ENCODE measurements at regions of chr16 and their contacts with region 1.

Region 1: DNA sequence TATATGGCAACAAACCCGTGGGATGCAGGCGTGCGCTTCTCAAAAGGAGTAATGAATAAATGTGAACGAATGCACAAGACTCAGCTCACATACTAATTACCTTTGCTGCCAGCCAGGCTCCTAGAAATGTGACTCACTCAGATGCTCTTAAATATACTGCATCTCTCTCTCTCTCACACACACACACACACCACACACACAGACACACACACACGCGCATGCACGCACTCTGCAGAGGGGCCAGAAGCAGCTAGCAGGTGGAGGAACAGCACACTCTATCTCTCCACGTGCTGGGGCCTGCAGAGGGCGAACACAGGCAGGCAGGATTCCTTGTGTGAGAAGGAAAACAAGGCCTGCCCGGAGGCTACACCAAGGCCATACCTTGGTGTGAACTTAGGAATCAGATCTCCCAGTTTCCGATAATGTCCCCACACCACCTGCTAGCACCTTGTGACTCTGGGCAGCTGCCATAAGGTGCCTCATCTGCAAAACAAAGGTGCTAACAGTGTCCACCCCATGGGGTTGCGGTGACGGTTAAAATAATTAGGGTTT is 5.3 kb downstream of the GPRC5B start:
- DNase-seq: peak in 3 of 5 donors; percentile 36 to 75 (median 54)
- ATAC-seq: peak; percentile 28 to 64 (median 48)
- H3K4me3 ChIP-seq: no peak overlapping the region
- H3K27ac ChIP-seq: peak overlapping the region in 9 of 12 donors; percentile 22 to 96 (median 75)
- H3K4me1 ChIP-seq: peaks cover 10 to 85% (median 59%) of the 10 kb centered on the region in 12 donors
- H3K27me3 ChIP-seq: peaks cover 0 to 14% (median 0%) of the 10 kb centered on the region in 9 donors
- CTCF ChIP-seq: no peak
- POLR2A ChIP-seq: no peak

Region 2: DNA sequence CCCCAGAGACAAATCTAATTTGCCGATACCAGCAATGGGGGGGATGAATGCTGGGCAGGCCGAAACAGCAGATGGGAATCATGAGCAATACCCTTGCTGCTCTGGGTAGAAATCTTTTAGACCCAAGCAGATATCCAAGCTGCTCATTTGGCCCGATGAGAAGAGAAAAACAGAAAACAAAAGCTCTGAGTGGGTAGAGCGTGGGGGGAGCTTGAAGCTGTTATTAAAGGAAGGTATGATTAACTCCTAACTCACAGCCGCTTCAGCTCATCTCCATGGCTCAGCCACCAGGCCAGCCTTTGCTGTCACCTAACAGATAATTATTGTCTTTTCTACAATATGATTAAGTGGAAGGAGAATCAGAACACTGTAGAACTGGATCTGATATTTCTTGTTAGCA is 265.5 kb before region 1 on chr16:
- intact Hi-C with region 1: no loop called
- DNase-seq: no peak
- ATAC-seq: no peak
- H3K4me3 ChIP-seq: no peak overlapping the region
- H3K27ac ChIP-seq: no peak overlapping the region
- H3K4me1 ChIP-seq: no peaks in the 10 kb centered on the region
- H3K27me3 ChIP-seq: no peaks in the 10 kb centered on the region
- CTCF ChIP-seq: no peak
- POLR2A ChIP-seq: no peak

Region 3: DNA sequence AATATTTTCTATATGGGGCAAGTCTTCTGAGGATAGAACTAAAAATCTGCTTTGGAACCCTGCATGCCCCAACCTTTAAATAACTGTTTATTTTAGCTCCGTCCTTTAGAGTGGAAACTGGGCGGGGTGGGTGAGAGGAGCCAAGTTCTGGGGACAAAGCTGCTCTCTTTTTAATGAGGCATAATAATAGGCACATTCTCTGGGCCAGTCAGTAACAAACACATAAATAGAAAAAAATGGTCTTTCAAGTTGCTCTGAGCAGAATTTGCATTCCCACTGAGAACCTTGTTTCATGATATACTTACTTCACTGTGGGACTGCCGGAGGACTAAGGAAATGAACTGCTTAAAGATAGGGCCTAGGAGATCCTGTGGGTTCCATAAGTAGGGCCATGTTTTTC is 212.8 kb before region 1 on chr16:
- intact Hi-C with region 1: loop called in 2 of 10 experiments (anchors 2 to 10 kb)
- DNase-seq: peak in 4 of 5 donors; percentile 49 to 69 (median 58)
- ATAC-seq: peak; percentile 81 to 93 (median 90)
- H3K4me3 ChIP-seq: no peak overlapping the region
- H3K27ac ChIP-seq: peak overlapping the region; percentile 26 to 57 (median 42)
- H3K4me1 ChIP-seq: peaks cover 0 to 25% (median 10%) of the 10 kb centered on the region in 12 donors
- H3K27me3 ChIP-seq: no peaks in the 10 kb centered on the region
- CTCF ChIP-seq: no peak
- POLR2A ChIP-seq: no peak

Region 4: DNA sequence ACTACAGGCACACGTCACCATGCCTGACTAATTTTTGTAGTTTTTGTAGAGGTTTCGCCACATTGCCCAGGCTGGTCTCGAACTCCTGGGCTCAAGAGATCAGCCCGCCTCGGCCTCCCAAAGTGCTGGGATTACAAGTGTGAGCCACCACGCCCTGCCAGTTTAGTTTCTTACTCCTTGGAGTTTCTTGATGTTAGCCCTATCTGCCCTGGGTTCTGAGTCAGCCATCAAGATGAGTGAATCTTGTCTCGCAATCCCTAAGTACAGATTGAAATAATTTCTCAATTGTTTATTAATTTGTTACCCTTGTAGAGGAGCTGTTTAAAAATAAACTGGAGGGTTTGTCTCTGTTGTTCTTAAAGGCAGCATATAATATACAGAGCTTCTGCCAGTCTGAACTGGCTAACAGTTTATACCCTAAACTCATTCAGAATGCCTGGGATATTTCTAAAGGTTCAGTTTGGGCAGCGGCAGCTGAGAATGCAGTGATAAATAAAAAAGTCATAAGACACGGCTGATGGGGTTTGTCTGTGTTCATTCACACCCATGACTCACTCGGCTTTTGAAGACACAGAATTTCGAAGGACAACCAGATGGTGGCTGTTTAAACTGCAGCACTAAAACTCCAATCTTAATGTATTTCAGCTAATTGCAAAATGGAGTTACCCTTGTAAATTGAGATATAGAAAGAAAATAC is 34.2 kb before region 1 on chr16:
- intact Hi-C with region 1: loop called in 2 of 10 experiments (anchors 5 kb)
- DNase-seq: no peak
- ATAC-seq: peak in 1 of 4 donors; percentile 16
- H3K4me3 ChIP-seq: no peak overlapping the region
- H3K27ac ChIP-seq: peak overlapping the region in 10 of 12 donors; percentile 5 to 70 (median 48)
- H3K4me1 ChIP-seq: peaks cover 0 to 25% (median 8%) of the 10 kb centered on the region in 12 donors
- H3K27me3 ChIP-seq: no peaks in the 10 kb centered on the region
- CTCF ChIP-seq: no peak
- POLR2A ChIP-seq: no peak

Region 5: DNA sequence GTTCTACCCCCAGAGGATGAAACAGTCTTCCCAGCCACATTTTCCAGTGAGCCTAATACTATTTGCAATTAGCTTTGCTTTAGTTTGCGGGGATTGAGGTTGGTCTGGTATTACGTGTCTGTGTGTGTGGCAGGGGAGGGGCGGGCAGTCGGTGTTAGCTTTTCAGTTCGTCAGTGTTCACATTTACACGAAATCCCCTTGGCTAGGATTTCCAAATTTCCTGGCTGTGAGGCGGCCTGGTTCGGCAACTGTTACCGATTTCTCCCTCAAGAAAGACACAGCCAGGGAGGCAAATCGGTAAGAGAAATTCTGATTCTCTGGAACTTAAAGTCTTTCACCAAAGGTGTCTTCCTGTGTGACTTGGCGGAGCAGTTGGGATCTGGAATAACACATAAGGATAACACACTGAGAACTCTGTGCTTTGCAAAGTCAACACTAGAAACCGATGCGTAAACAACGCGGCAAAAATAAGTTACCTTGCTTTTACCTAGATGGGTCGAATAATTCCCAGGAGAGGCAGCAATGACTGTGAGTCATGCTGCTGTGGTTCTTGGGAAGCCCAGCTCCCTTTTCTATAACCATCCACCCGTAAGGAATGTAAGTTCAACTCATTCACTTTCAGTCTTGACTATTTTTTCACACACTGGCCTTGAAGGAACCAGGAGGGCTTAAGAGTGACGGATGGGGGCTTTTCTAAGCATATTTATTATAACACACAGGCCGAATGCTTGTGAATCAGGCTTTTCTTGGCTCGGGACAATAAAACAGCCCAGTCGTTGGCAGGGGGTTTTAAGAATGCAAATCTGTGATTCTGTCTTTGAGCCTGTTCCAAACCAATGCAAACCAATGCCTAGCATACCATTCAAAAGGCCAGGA is 18.9 kb before region 1 on chr16:
- intact Hi-C with region 1: no loop called
- DNase-seq: no peak
- ATAC-seq: no peak
- H3K4me3 ChIP-seq: no peak overlapping the region
- H3K27ac ChIP-seq: peak overlapping the region in 1 of 12 donors; percentile 27
- H3K4me1 ChIP-seq: peaks cover 0 to 35% (median 16%) of the 10 kb centered on the region in 12 donors
- H3K27me3 ChIP-seq: no peaks in the 10 kb centered on the region
- CTCF ChIP-seq: no peak
- POLR2A ChIP-seq: no peak